ENCODE measurements at regions of chr14 and their contacts with region 1.

Region 1: DNA sequence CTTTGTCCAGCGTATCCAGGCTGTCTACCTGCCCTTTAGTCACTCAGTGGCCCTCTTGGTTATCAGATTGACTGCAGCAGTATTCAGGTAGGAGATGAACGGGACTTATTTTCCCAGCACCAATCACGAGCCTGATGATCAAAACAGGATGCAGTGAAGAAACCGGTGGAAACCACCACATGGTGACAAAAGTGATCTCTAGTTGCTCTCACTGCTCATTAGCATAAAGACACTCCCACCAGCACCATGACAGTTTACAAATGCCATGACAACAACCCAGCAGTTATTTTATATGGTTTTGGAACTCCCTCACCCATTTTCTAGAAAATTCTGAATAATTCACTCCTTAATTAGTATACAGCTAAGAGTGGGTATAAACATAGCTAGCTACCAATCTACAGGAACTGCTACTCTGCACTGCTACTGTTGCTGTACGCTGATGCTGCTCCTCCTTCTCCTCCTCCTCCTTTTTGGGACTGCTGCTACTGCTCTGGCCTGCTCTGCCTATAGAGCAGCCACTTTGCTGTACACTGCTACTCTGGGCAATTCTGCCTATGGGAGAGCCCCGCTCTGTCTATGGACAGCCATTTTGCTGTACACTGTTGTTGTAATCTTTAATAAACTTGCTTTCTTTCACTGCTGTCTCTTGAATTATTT is 142.5 kb upstream of the SSTR1 start:
- DNase-seq: no peak
- H3K4me3 ChIP-seq: no peak overlapping the region
- H3K27ac ChIP-seq: no peak overlapping the region
- H3K4me1 ChIP-seq: no peaks in the 10 kb centered on the region
- H3K27me3 ChIP-seq: no peaks in the 10 kb centered on the region
- CTCF ChIP-seq: no peak
- EP300 ChIP-seq: no peak
- POLR2A ChIP-seq: no peak

Region 2: DNA sequence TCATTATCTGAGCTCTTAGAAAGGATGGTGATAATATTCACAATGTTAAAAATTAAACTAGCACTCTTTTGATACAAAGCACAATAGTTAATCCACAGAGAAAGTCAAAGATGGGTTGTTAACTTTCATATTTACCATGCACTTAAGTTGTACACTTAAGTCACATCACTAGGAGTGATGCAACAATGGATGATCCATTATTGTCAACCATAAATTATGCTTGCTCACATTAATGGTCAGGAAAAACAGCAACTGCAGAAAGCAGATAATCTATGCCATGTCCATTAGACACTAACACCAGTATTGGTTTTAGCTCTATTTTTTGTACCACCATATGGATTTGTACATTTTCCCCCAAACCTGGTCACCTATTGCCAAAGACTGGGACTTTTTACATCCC is 665.7 kb before region 1 on chr14:
- intact Hi-C with region 1: loop called in 1 of 4 experiments (anchors 10 kb)
- DNase-seq: no peak
- H3K4me3 ChIP-seq: no peak overlapping the region
- H3K27ac ChIP-seq: no peak overlapping the region
- H3K4me1 ChIP-seq: no peaks in the 10 kb centered on the region
- H3K27me3 ChIP-seq: no peaks in the 10 kb centered on the region
- CTCF ChIP-seq: no peak
- EP300 ChIP-seq: no peak
- POLR2A ChIP-seq: no peak

Region 3: GRCh38 chr14:38481952-38482678 is 416.9 kb after region 1 on chr14:
- intact Hi-C with region 1: no loop called
- DNase-seq: no peak
- H3K4me3 ChIP-seq: no peak overlapping the region
- H3K27ac ChIP-seq: no peak overlapping the region
- H3K4me1 ChIP-seq: no peaks in the 10 kb centered on the region
- H3K27me3 ChIP-seq: no peaks in the 10 kb centered on the region
- CTCF ChIP-seq: no peak
- EP300 ChIP-seq: no peak
- POLR2A ChIP-seq: no peak